ENCODE measurements at regions of chr13 and their contacts with region 1.

Region 1: DNA sequence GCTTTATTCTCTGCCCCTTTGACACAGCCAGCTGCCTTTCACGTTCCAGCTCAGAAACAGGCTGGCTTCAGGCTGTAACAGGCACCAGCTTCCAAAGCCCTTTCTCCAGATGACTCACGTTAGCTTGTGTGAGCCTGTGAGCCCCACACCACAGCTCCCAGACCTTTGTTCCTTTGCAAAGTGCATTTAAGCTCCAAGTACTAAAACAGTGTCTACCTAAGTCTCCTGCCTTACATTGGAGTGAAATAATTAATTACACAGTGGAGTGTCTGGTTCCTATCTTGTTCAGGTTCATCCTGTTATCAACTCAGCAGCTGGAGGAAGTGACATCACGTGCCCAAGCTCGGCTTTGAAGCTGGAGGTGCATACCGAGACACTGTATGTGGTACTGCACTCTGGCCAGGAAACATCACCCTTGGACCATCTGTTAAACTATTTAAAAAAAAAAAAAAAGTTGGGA is 475.8 kb downstream of the FOXO1 start:
- DNase-seq: peak; percentile 74
- H3K4me3 ChIP-seq: no peak overlapping the region
- H3K27ac ChIP-seq: peak overlapping the region; percentile 69 to 79 (median 72)
- H3K4me1 ChIP-seq: peaks cover 0 to 68% (median 58%) of the 10 kb centered on the region in 4 donors
- H3K27me3 ChIP-seq: no peaks in the 10 kb centered on the region
- CTCF ChIP-seq: no peak
- EP300 ChIP-seq: peak in 1 of 4 donors; percentile 13
- POLR2A ChIP-seq: no peak

Region 2: GRCh38 chr13:39253774-39254173 is 936.9 kb before region 1 on chr13:
- intact Hi-C with region 1: no loop called
- DNase-seq: no peak
- H3K4me3 ChIP-seq: no peak overlapping the region
- H3K27ac ChIP-seq: no peak overlapping the region
- H3K4me1 ChIP-seq: no peaks in the 10 kb centered on the region
- H3K27me3 ChIP-seq: no peaks in the 10 kb centered on the region
- CTCF ChIP-seq: no peak
- EP300 ChIP-seq: no peak
- POLR2A ChIP-seq: no peak

Region 3: GRCh38 chr13:40069173-40070044 is 121.3 kb before region 1 on chr13:
- intact Hi-C with region 1: loop called (anchors 10 kb)
- DNase-seq: peak; percentile 86
- H3K4me3 ChIP-seq: no peak overlapping the region
- H3K27ac ChIP-seq: peak overlapping the region in 1 of 4 donors; percentile 31
- H3K4me1 ChIP-seq: peaks cover 0 to 14% (median 5%) of the 10 kb centered on the region in 4 donors
- H3K27me3 ChIP-seq: no peaks in the 10 kb centered on the region
- CTCF ChIP-seq: peak; percentile 73 to 89 (median 82)
- EP300 ChIP-seq: no peak
- POLR2A ChIP-seq: no peak

Region 4: DNA sequence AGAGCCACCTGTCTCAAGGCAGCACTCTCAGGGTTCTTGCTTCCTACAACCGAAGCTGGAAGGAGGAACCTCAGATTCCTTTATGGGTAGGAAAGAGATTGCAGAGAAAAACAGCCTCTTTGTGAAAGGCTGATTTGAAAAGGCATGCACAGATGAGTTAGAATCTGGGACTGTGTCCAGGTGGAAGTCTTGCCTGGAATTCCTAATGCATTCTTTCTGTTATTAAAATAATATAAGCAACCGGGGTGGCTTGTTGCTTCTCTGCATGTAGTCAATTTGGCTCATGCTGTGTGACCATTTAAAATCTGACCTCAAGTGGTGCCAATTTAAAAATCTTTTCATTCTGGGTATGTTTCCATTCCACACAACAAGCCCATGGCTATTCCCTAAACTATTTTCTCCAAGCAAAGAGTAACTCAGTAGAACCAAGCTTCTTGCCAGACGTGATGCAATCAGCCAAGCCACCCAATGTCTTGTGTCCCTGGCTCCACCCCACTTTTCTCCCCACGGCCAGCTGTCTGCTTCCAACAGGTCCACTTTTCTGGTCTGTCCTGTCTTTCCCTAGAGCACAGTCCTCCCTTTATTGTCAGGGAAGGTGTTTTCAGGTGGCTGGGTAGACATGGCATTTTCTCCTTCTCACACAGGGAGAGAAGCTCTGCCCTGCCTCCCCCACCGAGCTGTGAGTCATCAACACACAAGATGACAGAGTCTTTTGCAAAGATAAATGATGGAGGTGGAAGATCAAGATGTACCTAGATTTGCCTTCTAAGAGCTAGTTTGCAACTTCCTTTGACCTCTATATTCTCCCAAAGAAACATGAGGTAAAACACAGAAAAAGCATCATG is 81.5 kb after region 1 on chr13:
- intact Hi-C with region 1: no loop called
- DNase-seq: peak; percentile 93
- H3K4me3 ChIP-seq: no peak overlapping the region
- H3K27ac ChIP-seq: peak overlapping the region; percentile 66 to 84 (median 72)
- H3K4me1 ChIP-seq: peaks cover 0 to 34% (median 26%) of the 10 kb centered on the region in 4 donors
- H3K27me3 ChIP-seq: no peaks in the 10 kb centered on the region
- CTCF ChIP-seq: no peak
- EP300 ChIP-seq: no peak
- POLR2A ChIP-seq: no peak

Region 5: DNA sequence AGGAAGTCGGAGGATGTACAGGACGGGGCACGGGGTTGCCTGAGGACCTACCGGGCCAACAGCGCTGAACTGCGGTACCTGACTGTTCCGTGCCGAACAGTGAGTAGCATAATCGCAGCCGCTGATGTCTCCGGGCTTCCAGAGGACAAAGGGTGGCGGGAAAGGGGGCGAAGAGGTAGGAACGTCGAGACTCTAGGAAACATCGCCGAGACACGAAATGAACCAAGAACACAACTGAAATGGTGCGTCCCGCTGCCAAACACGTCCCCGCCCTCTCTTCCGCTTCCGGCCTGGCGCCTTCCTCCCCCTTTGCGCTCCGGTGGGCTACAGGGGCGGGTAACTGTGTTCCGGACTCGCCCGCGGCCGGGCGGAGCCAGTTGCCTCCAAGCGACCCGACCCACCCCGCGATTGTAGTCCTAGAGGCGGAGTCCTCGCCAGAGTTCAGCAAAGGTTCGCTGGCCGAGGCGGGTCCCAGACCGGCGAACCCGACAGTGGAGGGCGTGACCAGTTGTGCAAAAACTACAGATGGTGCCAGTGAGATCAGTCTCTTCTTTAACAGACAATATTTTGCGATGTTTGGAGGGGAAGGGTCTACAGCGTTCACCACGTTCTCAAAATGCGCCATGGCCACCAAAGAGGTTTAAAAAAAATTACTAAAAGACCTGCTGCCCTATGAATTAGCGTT is 580.4 kb after region 1 on chr13 and contains the start of gene MRPS31:
- intact Hi-C with region 1: no loop called
- DNase-seq: peak; percentile 97
- H3K4me3 ChIP-seq: peak within 1 kb of the TSS; percentile 68 to 83 (median 71)
- H3K27ac ChIP-seq: peak within 1 kb of the TSS; percentile 85 to 89 (median 86)
- H3K4me1 ChIP-seq: peaks cover 0 to 13% (median 9%) of the 10 kb centered on the region in 4 donors
- H3K27me3 ChIP-seq: no peaks in the 10 kb centered on the region
- CTCF ChIP-seq: no peak
- EP300 ChIP-seq: peak in 1 of 4 donors; percentile 4
- POLR2A ChIP-seq: peak in 1 of 2 donors; percentile 56
- total RNA-seq, gene MRPS31: 11.4 to 23.3 (median 21.1) TPM

Region 6: DNA sequence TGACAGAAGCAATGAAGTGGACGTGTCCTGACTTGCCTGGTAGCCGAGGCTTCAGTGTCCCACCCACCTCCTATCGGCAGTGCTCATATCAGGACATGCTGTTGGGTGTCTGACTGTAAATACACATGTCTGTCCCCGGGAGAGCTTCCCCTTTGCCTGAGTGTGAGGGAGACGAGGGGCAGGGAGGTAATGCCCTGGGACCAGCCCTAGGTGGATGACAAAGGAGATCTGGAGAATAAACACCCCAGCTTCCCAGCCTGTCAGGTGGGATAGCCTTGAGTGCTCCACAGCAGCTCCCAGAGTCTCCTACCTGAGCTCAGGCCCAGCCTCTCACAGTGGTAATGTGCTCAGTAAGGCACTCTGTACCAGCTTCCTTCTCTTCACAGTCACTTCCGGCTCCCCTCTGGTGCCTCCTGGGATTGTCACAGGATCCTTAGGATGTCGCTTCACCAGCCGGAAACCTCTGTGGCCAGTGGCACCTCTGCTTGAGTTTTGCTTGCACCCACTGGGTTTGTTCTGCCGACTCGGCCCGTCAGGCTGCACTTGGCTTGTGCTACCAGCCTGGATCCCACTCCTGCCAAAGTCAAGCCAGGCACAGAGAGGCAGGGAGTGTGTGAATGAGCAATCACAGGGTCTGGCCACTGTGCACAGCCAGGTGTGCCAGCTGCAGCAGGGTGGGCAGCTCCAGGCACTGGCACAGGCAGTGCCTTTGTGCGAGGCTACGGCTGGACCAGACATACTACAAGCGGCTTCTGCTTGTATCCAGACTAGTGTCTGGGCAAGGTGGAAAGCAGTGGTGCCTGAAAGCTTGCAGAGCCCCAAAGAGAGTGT is 1212.2 kb after region 1 on chr13:
- intact Hi-C with region 1: no loop called
- DNase-seq: no peak
- H3K4me3 ChIP-seq: no peak overlapping the region
- H3K27ac ChIP-seq: no peak overlapping the region
- H3K4me1 ChIP-seq: no peaks in the 10 kb centered on the region
- H3K27me3 ChIP-seq: no peaks in the 10 kb centered on the region
- CTCF ChIP-seq: no peak
- EP300 ChIP-seq: no peak
- POLR2A ChIP-seq: no peak